MCF 10A (cell line): ENCODE measurements at regions of chr11 and their contacts with region 1.

Region 1: GRCh38 chr11:75388386-75389275 is 10.7 kb upstream of the RPS3 start:
- DNase-seq: peak; percentile 86
- H3K4me3 Mint-ChIP-seq: no peak overlapping the region
- H3K27ac Mint-ChIP-seq: no peak overlapping the region
- H3K4me1 Mint-ChIP-seq: peaks cover 5% of the 10 kb centered on the region
- H3K27me3 Mint-ChIP-seq: no peaks in the 10 kb centered on the region
- CTCF ChIP-seq: peak; percentile 67

Region 2: DNA sequence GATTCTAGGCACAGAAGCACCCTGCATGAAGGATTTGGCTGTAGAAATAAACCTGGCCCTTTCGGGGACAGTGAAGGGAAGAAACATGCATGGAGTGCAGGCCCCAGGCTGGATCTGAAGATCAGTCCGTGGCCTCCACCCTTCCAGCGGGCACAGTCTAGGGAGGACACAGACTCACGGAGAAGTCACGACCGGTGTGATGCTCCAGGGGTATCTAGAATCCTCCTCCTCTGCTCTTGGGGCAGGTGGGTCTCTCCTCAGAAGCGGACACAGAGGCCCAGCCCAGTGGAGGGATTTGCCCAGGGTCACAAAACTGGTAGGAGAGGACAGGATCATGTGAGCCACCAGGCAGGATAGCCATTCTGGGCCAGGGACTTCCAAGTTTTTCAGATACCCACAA is 215.3 kb before region 1 on chr11:
- CTCF ChIA-PET with region 1: no interaction called
- POLR2A ChIA-PET with region 1: no interaction called
- intact Hi-C with region 1: no loop called
- DNase-seq: no peak
- H3K4me3 Mint-ChIP-seq: no peak overlapping the region
- H3K27ac Mint-ChIP-seq: no peak overlapping the region
- H3K4me1 Mint-ChIP-seq: no peaks in the 10 kb centered on the region
- H3K27me3 Mint-ChIP-seq: no peaks in the 10 kb centered on the region
- CTCF ChIP-seq: no peak

Region 3: GRCh38 chr11:75280227-75280701 is 108.4 kb before region 1 on chr11:
- CTCF ChIA-PET with region 1: interaction called, 453 read pairs
- POLR2A ChIA-PET with region 1: interaction called, 6 read pairs
- intact Hi-C with region 1: loop called (anchors 1 kb)
- DNase-seq: peak; percentile 70
- H3K4me3 Mint-ChIP-seq: no peak overlapping the region
- H3K27ac Mint-ChIP-seq: no peak overlapping the region
- H3K4me1 Mint-ChIP-seq: no peaks in the 10 kb centered on the region
- H3K27me3 Mint-ChIP-seq: no peaks in the 10 kb centered on the region
- CTCF ChIP-seq: peak; percentile 90

Region 4: DNA sequence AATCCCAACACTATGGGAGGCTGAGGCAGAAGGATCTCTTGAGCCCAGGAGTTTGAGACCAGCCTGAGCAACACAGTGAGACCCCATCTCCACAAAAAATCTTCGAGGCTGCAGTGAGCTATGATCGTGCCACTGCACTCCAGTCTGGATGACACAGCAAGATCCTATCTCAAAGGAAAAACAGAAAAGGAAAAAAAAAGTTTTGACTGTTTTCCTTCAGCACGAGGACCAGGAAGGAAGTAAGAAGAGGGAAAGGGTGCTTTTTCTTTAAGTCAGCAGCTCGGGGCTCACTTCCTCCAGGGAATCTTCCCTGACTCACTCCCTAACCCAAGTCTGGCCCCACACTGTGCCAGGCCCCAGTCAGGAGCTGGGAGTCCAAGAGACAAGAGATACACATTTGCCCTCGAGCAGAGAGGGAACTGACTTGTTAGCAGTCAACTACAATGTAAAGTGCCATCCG is 51.4 kb before region 1 on chr11:
- CTCF ChIA-PET with region 1: interaction called, 36 read pairs
- POLR2A ChIA-PET with region 1: no interaction called
- intact Hi-C with region 1: no loop called
- DNase-seq: peak; percentile 72
- H3K4me3 Mint-ChIP-seq: no peak overlapping the region
- H3K27ac Mint-ChIP-seq: no peak overlapping the region
- H3K4me1 Mint-ChIP-seq: peaks cover 28% of the 10 kb centered on the region
- H3K27me3 Mint-ChIP-seq: no peaks in the 10 kb centered on the region
- CTCF ChIP-seq: no peak

Region 5: DNA sequence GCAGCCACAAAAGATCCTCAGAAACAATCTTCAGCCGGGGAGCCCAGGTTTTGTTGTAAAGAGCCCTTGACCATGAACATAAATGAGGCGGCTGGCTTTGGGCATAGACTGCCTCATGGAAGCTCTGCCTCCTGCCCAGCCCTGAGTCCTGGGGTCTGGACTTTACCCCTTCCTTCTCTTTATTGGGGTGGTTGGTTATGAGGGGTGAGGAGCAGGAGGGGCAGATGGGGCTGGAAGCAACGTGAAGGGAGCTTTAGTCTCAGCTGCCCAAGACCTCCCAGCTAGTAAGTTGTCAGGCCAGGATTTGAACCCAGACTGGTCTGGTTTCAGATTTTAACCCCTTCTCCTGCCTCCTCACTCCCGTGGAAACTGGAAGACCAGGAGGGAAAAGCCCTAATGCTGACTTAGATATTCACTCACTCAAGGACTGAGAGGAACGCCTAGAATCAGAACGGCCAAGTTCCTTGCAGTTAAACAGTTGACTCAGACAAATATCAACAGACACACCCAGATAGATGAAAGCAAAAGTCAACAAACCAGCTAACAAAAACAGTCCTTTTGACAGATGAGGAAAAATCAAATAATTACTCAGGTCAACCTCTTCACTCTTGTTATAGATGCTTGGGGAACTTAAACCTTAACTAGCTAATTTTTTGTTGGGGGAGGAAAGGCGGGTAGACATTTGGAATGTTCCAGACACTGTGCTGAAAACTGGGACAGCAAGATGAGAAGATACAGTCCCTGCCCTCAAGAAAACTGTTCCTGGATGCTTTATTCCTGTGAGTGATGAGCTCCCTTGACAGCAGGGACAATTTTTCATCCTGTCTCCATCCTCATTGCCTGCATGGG is 16.5 kb before region 1 on chr11:
- CTCF ChIA-PET with region 1: interaction called, 12 read pairs
- POLR2A ChIA-PET with region 1: no interaction called
- intact Hi-C with region 1: no loop called
- DNase-seq: peak; percentile 54
- H3K4me3 Mint-ChIP-seq: peak overlapping the region; percentile 38
- H3K27ac Mint-ChIP-seq: no peak overlapping the region
- H3K4me1 Mint-ChIP-seq: peaks cover 6% of the 10 kb centered on the region
- H3K27me3 Mint-ChIP-seq: no peaks in the 10 kb centered on the region
- CTCF ChIP-seq: no peak

Region 6: GRCh38 chr11:75406338-75406777 is 17.7 kb after region 1 on chr11:
- CTCF ChIA-PET with region 1: interaction called, 23 read pairs
- POLR2A ChIA-PET with region 1: interaction called, 15 read pairs
- intact Hi-C with region 1: no loop called
- DNase-seq: no peak
- H3K4me3 Mint-ChIP-seq: no peak overlapping the region
- H3K27ac Mint-ChIP-seq: no peak overlapping the region
- H3K4me1 Mint-ChIP-seq: peaks cover 36% of the 10 kb centered on the region
- H3K27me3 Mint-ChIP-seq: no peaks in the 10 kb centered on the region
- CTCF ChIP-seq: no peak

Region 7: GRCh38 chr11:75532200-75533048 is 143.8 kb after region 1 on chr11:
- CTCF ChIA-PET with region 1: interaction called, 88 read pairs
- POLR2A ChIA-PET with region 1: no interaction called
- intact Hi-C with region 1: loop called (anchors 1 kb)
- DNase-seq: peak; percentile 80
- H3K4me3 Mint-ChIP-seq: no peak overlapping the region
- H3K27ac Mint-ChIP-seq: no peak overlapping the region
- H3K4me1 Mint-ChIP-seq: peaks cover 5% of the 10 kb centered on the region
- H3K27me3 Mint-ChIP-seq: no peaks in the 10 kb centered on the region
- CTCF ChIP-seq: peak; percentile 87